ENCODE measurements at regions of chr13 and their contacts with region 1.

Region 1: GRCh38 chr13:77239312-77239711 is 87.6 kb downstream of the MYCBP2 start:
- DNase-seq: no peak
- H3K4me3 ChIP-seq: no peak overlapping the region
- H3K27ac ChIP-seq: no peak overlapping the region
- H3K4me1 ChIP-seq: no peaks in the 10 kb centered on the region
- H3K27me3 ChIP-seq: no peaks in the 10 kb centered on the region
- CTCF ChIP-seq: no peak
- EP300 ChIP-seq: no peak
- POLR2A ChIP-seq: no peak

Region 2: GRCh38 chr13:77185721-77186120 is 53.6 kb before region 1 on chr13:
- intact Hi-C with region 1: no loop called
- DNase-seq: no peak
- H3K4me3 ChIP-seq: no peak overlapping the region
- H3K27ac ChIP-seq: no peak overlapping the region
- H3K4me1 ChIP-seq: no peaks in the 10 kb centered on the region
- H3K27me3 ChIP-seq: no peaks in the 10 kb centered on the region
- CTCF ChIP-seq: no peak
- EP300 ChIP-seq: no peak
- POLR2A ChIP-seq: no peak

Region 3: DNA sequence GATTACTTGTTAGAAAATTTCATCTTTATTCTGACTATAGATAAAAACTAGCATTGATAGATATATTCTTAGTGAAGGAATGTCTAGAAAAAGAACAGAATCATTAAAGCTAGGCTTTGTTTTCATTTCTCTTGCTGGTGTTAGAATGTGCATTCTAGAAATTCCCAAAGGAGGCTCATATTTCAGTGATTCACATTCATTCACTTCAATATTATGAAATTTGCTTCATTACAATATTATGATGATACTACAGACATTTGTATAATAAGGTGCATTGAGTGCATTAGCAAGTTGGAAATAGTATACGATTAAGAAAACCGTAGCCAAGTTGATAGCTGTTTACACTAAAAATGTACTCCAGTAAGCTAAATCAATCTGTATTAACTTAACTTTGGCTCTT is 158.3 kb after region 1 on chr13:
- intact Hi-C with region 1: loop called in 1 of 4 experiments (anchors 5 kb)
- DNase-seq: no peak
- H3K4me3 ChIP-seq: no peak overlapping the region
- H3K27ac ChIP-seq: no peak overlapping the region
- H3K4me1 ChIP-seq: no peaks in the 10 kb centered on the region
- H3K27me3 ChIP-seq: no peaks in the 10 kb centered on the region
- CTCF ChIP-seq: no peak
- EP300 ChIP-seq: no peak
- POLR2A ChIP-seq: no peak

Measured in ovary (tissue), 10 donors.